Activated CD4-positive, alpha-beta memory T cell treated with anti-CD3 and anti-CD28 coated beads for 36 hours (primary cell): ENCODE measurements at regions of chr5 and their contacts with region 1.

Region 1: GRCh38 chr5:115544436-115545350 is at the start of gene FEM1C:
- DNase-seq: peak; percentile 98
- H3K4me3 Mint-ChIP-seq: peak within 1 kb of the TSS; percentile 96
- H3K27ac Mint-ChIP-seq: peak within 1 kb of the TSS; percentile 98
- H3K4me1 Mint-ChIP-seq: peaks cover 37% of the 10 kb centered on the region
- H3K27me3 Mint-ChIP-seq: no peaks in the 10 kb centered on the region
- total RNA-seq, gene FEM1C: 12.2 to 12.5 TPM

Region 2: DNA sequence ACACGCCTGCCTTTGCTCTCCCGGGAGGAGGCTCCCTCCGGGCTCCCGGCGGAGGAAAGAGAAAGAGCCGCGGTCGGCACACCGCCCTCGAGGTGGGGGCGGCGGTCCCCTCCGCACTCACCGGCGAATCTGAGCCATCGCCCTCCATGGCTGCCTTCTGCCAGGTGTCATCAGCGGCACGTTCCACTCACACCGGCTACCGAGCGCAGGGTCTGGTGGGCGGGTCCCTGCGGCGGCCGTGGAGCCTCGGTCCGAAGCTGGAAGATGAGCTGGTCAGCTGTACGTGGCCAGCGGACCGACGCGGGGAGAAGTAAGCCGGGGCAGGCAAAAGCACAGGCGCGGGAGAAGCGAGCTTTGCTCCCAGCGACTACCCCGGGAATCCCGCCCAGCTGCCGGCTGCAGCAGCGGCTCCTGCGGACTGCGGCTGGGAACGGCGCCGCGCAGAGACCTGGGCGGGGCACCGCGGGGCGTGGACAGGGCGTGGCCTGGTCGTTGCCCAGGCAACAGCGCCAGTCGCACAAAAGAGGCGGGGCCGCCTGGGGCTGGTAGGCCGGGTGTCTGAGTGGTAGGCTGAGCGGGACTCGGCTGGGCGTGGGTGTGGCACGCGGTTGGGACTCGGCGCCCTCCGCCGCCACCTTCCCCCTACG is 375.1 kb before region 1 on chr5 and contains the start of gene TRIM36:
- CTCF ChIA-PET with region 1: no interaction called
- POLR2A ChIA-PET with region 1: no interaction called
- intact Hi-C with region 1: loop called (anchors 5 kb)
- DNase-seq: peak; percentile 94
- H3K4me3 Mint-ChIP-seq: peak within 1 kb of the TSS; percentile 79
- H3K27ac Mint-ChIP-seq: peak within 1 kb of the TSS; percentile 26
- H3K4me1 Mint-ChIP-seq: peaks cover 6% of the 10 kb centered on the region
- H3K27me3 Mint-ChIP-seq: peaks cover 58% of the 10 kb centered on the region
- total RNA-seq, gene TRIM36: not detected

Region 3: DNA sequence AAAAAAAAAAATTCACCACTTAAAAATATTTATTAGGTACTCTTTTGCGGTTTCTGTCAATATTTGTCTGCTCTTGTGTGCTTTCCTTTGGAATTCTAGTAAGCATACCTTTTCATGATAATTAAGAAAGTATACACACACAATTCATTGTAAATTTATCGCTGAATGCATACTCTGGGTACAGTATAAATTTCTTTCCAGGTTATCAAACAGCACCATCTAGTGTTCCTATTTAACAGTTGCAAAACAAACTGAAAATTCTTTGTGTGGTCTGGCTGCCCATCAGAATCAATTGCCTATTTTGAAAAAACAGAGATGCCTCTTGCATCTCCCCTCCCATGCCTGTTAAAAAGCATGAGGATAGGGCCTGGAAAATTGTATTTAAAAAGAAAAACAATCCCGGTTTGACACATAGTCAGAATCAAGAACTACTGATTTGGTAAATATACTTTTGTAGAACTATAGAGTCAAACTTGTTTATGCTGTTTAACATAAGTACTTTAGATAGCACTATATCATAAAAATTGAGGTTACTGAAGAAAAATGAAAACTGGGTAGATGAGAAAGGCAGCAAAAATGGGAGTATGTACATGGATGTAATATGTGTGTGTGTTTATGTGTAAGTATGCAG is 298.2 kb before region 1 on chr5:
- CTCF ChIA-PET with region 1: no interaction called
- POLR2A ChIA-PET with region 1: no interaction called
- intact Hi-C with region 1: no loop called
- DNase-seq: no peak
- H3K4me3 Mint-ChIP-seq: no peak overlapping the region
- H3K27ac Mint-ChIP-seq: no peak overlapping the region
- H3K4me1 Mint-ChIP-seq: peaks cover 16% of the 10 kb centered on the region
- H3K27me3 Mint-ChIP-seq: no peaks in the 10 kb centered on the region

Region 4: DNA sequence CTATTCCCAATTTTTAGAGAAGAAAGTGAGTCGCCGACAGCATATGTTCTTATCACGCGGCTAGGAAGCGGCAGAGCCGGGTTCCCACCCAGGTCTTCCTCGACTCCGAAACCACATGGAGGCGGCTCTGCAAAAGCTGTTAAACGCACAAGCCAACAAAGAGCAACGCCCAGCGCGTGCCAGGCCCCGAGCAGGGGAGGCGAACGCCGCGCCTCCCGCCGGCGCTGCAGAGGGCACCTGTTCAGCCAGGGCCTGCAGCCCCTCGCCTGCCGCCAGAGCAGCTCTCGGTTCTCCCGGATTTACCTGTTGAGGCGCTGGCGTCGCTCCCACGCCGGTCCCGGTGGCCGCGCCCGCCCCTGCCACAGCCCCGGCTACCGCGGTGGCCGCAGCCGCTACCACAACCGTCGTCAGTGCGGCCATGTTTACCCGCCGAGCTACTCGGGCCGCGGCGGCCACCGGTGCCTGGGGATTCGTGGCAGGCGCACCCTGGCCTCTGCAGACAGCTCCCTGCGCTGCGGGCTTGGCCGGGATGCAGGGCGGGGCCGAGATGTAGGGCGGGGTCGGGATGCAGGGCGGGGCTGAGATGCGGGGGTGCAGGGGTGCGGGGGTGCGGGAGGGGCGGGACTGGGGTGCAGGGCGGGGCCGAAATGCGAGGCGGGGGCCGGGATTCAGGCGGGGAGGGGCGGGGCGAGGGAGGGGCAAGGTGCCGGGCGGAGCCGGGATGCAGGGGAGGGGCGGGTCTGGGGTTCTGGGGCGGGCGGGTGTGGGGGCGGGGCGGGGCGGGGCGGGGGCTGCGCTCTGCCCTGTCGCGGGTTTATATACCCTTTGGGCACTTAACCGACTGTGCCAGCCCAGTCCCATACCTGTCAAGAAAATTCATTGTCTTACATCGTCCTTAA is 248.3 kb before region 1 on chr5 and contains the start of gene CCDC112:
- CTCF ChIA-PET with region 1: no interaction called
- POLR2A ChIA-PET with region 1: interaction called, 8 read pairs
- intact Hi-C with region 1: loop called (anchors 1 kb)
- DNase-seq: peak; percentile 87
- H3K4me3 Mint-ChIP-seq: peak within 1 kb of the TSS; percentile 76
- H3K27ac Mint-ChIP-seq: no peak within 1 kb of the TSS
- H3K4me1 Mint-ChIP-seq: peaks cover 7% of the 10 kb centered on the region
- H3K27me3 Mint-ChIP-seq: peaks cover 8% of the 10 kb centered on the region
- total RNA-seq, gene CCDC112: 1.7 to 1.8 TPM

Region 5: GRCh38 chr5:115460472-115460871 is 84.2 kb before region 1 on chr5:
- CTCF ChIA-PET with region 1: no interaction called
- POLR2A ChIA-PET with region 1: interaction called, 11 read pairs
- intact Hi-C with region 1: loop called (anchors 1 kb)
- DNase-seq: peak; percentile 25
- H3K4me3 Mint-ChIP-seq: no peak overlapping the region
- H3K27ac Mint-ChIP-seq: no peak overlapping the region
- H3K4me1 Mint-ChIP-seq: peaks cover 15% of the 10 kb centered on the region
- H3K27me3 Mint-ChIP-seq: peaks cover 17% of the 10 kb centered on the region

Region 6: DNA sequence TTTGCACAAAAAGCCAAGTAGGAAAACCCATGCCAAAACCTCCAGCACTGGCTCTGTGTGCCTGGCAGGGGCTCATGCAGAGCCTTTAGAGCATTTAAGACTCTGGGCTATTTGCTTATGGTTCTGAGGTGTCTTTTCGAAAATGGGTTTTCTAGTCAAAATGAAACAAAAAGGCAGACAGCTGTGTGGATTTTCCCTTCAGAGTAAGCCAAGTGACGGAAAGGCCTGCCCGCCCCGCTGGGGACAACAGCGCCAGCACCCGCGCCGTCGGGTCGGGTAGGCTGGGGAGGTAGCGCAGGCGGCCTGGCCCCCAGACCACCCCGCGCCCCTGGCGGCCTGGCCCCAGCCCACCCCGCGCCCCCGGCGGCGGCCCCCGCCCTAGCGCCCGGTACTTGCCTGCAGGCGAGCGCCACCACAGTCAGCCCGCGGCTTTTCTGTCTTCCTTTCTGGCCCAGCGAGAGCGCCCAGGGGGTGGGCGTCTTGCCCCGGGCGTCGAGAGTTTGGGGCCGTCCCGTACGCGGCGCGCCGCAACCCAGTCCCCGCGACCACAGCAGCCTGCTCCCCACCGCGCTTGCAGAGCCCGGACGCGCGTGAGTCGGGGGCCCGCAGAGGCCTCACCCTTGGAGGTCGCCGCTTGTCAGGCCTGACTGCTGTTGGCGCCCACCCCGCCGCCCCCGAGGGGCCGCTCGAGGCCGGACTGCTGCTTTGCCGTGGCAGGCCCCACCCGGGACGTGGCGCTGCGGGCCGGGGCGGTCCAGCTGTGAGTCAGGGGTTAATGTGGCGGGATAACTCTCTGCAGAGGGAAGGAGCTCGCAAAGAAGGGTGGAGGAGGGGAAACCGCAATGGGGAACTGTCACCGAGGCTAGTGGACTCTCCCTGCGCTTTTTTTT is 57.3 kb after region 1 on chr5 and contains the start of gene TICAM2:
- CTCF ChIA-PET with region 1: no interaction called
- POLR2A ChIA-PET with region 1: no interaction called
- intact Hi-C with region 1: loop called (anchors 2 kb)
- DNase-seq: peak; percentile 76
- H3K4me3 Mint-ChIP-seq: peak within 1 kb of the TSS; percentile 53
- H3K27ac Mint-ChIP-seq: peak within 1 kb of the TSS; percentile 18
- H3K4me1 Mint-ChIP-seq: peaks cover 25% of the 10 kb centered on the region
- H3K27me3 Mint-ChIP-seq: no peaks in the 10 kb centered on the region
- total RNA-seq, gene TICAM2: 0.40 to 2.0 TPM

Region 7: GRCh38 chr5:116084871-116085715 is 540.4 kb after region 1 on chr5 and contains the start of gene COMMD10:
- CTCF ChIA-PET with region 1: no interaction called
- POLR2A ChIA-PET with region 1: no interaction called
- intact Hi-C with region 1: loop called (anchors 5 kb)
- DNase-seq: peak; percentile 81
- H3K4me3 Mint-ChIP-seq: peak within 1 kb of the TSS; percentile 88
- H3K27ac Mint-ChIP-seq: peak within 1 kb of the TSS; percentile 93
- H3K4me1 Mint-ChIP-seq: peaks cover 37% of the 10 kb centered on the region
- H3K27me3 Mint-ChIP-seq: no peaks in the 10 kb centered on the region
- total RNA-seq, gene COMMD10: 22.1 to 24.3 TPM